H1 (cell line): ENCODE measurements at regions of chr10 and their contacts with region 1.

Region 1: DNA sequence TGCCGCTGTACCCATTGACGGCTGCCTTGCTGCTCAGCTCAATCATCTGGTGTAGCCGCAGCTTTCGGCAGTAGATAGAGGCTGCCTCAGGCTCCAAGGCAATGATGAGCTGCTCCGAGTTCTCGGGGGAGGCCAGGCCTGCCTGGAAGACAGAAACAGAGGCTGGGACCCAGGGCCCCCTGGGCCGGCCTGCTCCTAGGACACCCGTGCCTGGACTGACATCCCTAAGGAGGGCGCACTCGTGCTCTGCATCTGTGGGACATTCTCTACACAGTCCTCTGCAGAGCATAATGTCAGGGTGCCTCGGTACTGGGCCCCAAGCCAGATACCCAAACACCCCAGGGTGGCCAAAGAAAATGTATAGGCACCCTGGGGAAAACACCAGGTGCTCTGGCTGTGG is 58.5 kb downstream of the HSPA12A start:
- DNase-seq: no peak
- H3K4me3 ChIP-seq: no peak overlapping the region
- H3K27ac ChIP-seq: no peak overlapping the region
- H3K4me1 ChIP-seq: peaks cover 0 to 8% (median 0%) of the 10 kb centered on the region in 4 experiments; a peak in 1 of 7 replicates
- H3K27me3 ChIP-seq: no peaks in the 10 kb centered on the region
- CTCF ChIP-seq: no peak
- EP300 ChIP-seq: no peak
- POLR2A ChIP-seq: no peak
- RAD21 ChIP-seq: no peak; a peak in 1 of 4 replicates

Region 2: GRCh38 chr10:116654816-116655215 is 29.0 kb before region 1 on chr10:
- CTCF ChIA-PET with region 1: interaction called, 13 read pairs
- POLR2A ChIA-PET with region 1: no interaction called
- DNase-seq: no peak
- H3K4me3 ChIP-seq: no peak overlapping the region
- H3K27ac ChIP-seq: no peak overlapping the region
- H3K4me1 ChIP-seq: no peaks in the 10 kb centered on the region
- H3K27me3 ChIP-seq: no peaks in the 10 kb centered on the region
- CTCF ChIP-seq: peak; percentile 43 to 66 (median 47)
- EP300 ChIP-seq: no peak
- POLR2A ChIP-seq: no peak
- RAD21 ChIP-seq: peak; percentile 37 to 42

Region 3: GRCh38 chr10:116704926-116705325 is 21.1 kb after region 1 on chr10:
- CTCF ChIA-PET with region 1: interaction called, 45 read pairs
- POLR2A ChIA-PET with region 1: interaction called, 4 read pairs
- DNase-seq: no peak
- H3K4me3 ChIP-seq: no peak overlapping the region
- H3K27ac ChIP-seq: no peak overlapping the region
- H3K4me1 ChIP-seq: peaks cover 4 to 14% (median 10%) of the 10 kb centered on the region in 4 experiments
- H3K27me3 ChIP-seq: no peaks in the 10 kb centered on the region
- CTCF ChIP-seq: no peak
- EP300 ChIP-seq: no peak
- POLR2A ChIP-seq: no peak
- RAD21 ChIP-seq: no peak

Region 4: DNA sequence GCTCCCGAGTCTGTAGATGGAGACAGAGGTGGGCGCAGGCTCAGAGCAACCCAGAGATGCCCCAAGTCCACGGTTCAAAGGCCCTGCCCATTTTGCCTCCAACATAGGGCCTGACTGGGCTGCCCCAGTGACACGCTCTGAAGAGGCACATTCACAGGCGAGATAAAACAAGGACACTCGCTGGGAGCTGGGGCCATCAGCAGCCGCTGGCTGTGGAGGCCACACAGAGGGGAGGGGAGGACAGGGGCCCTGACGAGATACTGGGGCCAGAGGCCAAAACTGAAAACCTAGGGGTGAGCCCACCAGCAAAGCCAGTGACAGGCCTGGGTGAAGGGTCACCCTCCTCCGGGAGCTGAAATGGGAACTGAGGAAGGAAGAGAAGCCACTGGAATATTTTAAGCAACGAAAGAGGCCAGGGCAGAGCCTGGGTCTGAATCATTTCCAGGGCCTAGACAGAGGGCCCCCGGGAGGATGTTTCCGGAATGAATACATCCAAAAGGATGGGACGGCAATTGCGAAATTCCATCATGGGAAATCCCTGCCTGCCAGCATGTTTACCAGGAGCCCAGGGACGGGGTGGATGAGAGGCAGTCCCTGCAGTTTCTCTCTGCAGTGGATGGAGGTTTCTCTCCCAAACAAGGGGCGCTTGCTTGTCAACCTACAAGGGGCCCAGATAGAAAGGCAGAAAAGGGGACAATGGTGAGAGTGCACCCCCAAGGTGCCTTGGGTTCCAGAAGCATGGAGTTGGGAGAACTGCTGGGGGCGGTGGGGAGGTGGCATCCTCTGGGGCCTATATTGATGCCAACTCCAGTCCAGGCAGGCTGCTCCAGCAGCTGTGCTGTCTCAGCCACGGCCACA is 87.5 kb after region 1 on chr10:
- CTCF ChIA-PET with region 1: interaction called, 30 read pairs
- POLR2A ChIA-PET with region 1: no interaction called
- DNase-seq: no peak
- H3K4me3 ChIP-seq: no peak overlapping the region
- H3K27ac ChIP-seq: no peak overlapping the region
- H3K4me1 ChIP-seq: peaks cover 0 to 7% (median 0%) of the 10 kb centered on the region in 4 experiments; a peak in 2 of 7 replicates
- H3K27me3 ChIP-seq: no peaks in the 10 kb centered on the region; a peak in 1 of 7 replicates
- CTCF ChIP-seq: no peak
- EP300 ChIP-seq: no peak
- POLR2A ChIP-seq: no peak
- RAD21 ChIP-seq: no peak

Region 5: DNA sequence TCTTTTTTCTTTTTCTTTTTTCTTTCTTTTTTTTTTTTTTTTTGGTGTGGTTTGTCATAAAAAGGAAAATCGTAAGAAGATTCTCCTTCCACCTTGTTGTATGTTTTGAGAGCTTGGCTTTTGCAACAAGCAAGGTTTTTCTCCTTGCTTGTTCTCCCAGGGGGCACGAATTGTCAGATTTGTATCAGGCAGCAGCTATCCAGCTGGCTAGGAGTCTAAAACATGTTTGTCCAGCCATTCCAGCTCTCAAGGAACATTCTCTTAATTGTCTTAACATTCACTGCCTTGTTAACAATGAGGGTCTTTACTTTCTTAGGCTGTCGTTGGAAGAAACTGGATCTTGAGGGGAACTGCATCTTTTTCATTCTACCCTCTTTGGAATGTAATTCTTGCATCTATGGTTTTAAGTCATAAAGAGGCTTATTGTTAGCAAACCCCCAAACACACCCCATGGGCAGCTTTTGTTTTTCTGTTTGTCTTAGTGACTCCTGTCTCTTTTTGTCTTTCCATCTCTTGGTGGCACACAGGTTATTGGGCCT is 306.5 kb after region 1 on chr10:
- CTCF ChIA-PET with region 1: no interaction called
- POLR2A ChIA-PET with region 1: no interaction called
- DNase-seq: no peak
- H3K4me3 ChIP-seq: no peak overlapping the region
- H3K27ac ChIP-seq: no peak overlapping the region
- H3K4me1 ChIP-seq: peaks cover 4 to 10% (median 5%) of the 10 kb centered on the region in 4 experiments; a peak in 4 of 7 replicates
- H3K27me3 ChIP-seq: peaks cover 0 to 3% (median 0%) of the 10 kb centered on the region in 4 experiments; a peak in 1 of 7 replicates
- CTCF ChIP-seq: no peak
- EP300 ChIP-seq: no peak
- POLR2A ChIP-seq: no peak
- RAD21 ChIP-seq: no peak

Region 6: GRCh38 chr10:117167789-117168674 is 484.2 kb after region 1 on chr10:
- CTCF ChIA-PET with region 1: interaction called, 10 read pairs
- POLR2A ChIA-PET with region 1: no interaction called
- DNase-seq: peak in 1 of 2 experiments; percentile 96
- H3K4me3 ChIP-seq: peak overlapping the region; percentile 32 to 69 (median 42)
- H3K27ac ChIP-seq: no peak overlapping the region
- H3K4me1 ChIP-seq: peaks cover 0 to 23% (median 7%) of the 10 kb centered on the region in 4 experiments; a peak in 6 of 7 replicates
- H3K27me3 ChIP-seq: peaks cover 76 to 98% (median 92%) of the 10 kb centered on the region in 4 experiments
- CTCF ChIP-seq: peak; percentile 71 to 88 (median 81)
- EP300 ChIP-seq: no peak
- POLR2A ChIP-seq: no peak
- RAD21 ChIP-seq: peak; percentile 52 to 61; a peak in 3 of 4 replicates